ENCODE measurements at regions of chr17 and their contacts with region 1.

Region 1: GRCh38 chr17:81702971-81703746 is at the start of gene MRPL12:
- DNase-seq: peak; percentile 71 to 91
- H3K4me3 ChIP-seq: peak within 1 kb of the TSS; percentile 90
- H3K27ac ChIP-seq: peak within 1 kb of the TSS; percentile 77
- H3K4me1 ChIP-seq: peaks cover 7% of the 10 kb centered on the region
- H3K27me3 ChIP-seq: no peaks in the 10 kb centered on the region
- CTCF ChIP-seq: peak; percentile 50; the same call in 1 of the 2 replicates
- total RNA-seq, gene MRPL12: 98.6 and 142 TPM in 2 replicates

Region 2: GRCh38 chr17:81641825-81642489 is 61.2 kb before region 1 on chr17:
- CTCF ChIA-PET with region 1: no interaction called
- POLR2A ChIA-PET with region 1: no interaction called
- intact Hi-C with region 1: no loop called
- DNase-seq: peak in 1 of 2 experiments; percentile 40
- H3K4me3 ChIP-seq: no peak overlapping the region
- H3K27ac ChIP-seq: no peak overlapping the region
- H3K4me1 ChIP-seq: peaks cover 5% of the 10 kb centered on the region; the same call in 1 of the 2 replicates
- H3K27me3 ChIP-seq: no peaks in the 10 kb centered on the region
- CTCF ChIP-seq: no peak

Region 3: DNA sequence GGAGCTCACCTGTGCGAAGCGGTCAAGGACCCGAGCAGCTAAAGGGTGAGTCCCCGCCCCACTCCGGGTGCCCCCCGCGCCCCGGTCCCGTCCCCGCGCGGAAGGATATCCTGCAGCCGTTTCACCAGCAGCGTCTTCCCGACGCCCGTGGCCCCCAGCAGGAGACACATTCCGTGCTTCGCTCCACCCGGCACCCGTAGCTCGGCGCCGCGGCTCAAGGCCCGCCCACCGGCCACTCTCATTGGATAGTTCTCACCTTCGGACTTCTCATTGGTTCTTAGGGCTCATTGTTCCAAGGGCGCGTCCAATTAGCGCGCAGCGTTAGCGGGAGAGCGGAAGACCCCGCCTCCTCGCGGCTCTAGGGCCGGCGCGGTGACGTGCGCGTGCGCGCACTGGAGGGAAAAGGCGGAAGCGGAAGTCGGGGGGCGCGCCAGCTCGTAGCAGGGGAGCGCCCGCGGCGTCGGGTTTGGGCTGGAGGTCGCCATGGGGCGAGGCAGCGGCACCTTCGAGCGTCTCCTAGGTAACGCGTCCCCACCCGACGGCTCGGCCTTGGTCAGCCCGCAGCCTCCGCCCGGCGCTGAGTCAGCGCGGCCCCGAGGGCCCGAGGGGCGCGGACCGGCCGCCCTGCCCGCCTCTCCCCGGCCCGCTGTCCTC is 19.4 kb before region 1 on chr17 and contains the starts of genes ARL16 and HGS:
- CTCF ChIA-PET with region 1: no interaction called
- POLR2A ChIA-PET with region 1: interaction called, 3 read pairs
- intact Hi-C with region 1: loop called (anchors 1 kb)
- DNase-seq: peak; percentile 90 to 99
- H3K4me3 ChIP-seq: peak within 1 kb of the TSS; percentile 93
- H3K27ac ChIP-seq: peak within 1 kb of the TSS; percentile 78
- H3K4me1 ChIP-seq: peaks cover 5% of the 10 kb centered on the region
- H3K27me3 ChIP-seq: no peaks in the 10 kb centered on the region
- CTCF ChIP-seq: no peak
- total RNA-seq, gene ARL16: 41.7 and 48.3 TPM in 2 replicates
- total RNA-seq, gene HGS: 149 and 166 TPM in 2 replicates

Region 4: DNA sequence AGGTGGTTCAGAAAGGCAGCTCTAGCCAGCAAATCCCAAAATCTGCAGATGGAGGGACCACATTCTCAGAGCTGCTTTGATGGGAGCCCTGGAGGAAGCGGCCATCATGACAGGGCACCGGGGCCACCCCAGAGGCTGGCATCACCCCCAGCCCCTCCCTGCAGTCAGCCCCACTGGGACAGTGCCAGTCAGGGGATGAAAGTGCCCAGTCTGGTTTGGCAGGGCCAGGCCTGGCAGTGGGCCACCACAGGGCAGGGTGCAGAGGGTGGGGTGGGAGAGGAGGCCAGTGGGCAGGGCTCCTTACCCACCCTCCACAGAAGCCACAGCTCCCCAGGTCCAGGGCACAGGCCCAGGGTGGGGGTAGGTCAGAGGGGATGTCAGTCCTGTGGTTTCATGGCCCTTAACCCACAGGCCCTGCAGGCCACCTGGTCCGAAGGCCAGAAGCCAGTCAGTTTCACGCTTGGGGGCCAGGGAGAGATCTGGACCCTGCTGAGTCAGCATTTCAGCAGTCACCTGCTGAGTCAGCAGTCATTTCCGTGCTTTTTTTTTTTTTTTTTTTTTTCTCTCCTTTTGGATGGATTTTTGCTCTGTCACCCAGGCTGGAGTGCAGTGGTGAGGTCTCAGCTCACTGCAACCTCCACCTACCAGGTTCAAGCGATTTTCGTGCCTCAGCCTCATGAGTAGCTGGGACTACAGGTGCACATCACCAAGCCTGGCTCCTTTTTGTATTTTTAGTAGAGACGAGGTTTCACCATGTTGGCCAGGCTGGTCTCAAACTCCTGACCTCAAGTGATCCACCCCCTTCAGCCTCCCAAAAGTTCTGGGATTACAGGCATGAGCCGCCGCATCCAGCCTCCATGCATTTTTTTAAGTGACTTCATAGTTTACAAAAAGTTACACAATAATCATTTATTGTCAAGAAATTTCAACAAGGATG is 19.3 kb after region 1 on chr17:
- CTCF ChIA-PET with region 1: interaction called, 12 read pairs
- POLR2A ChIA-PET with region 1: no interaction called
- intact Hi-C with region 1: no loop called
- DNase-seq: peak; percentile 79 to 99
- H3K4me3 ChIP-seq: no peak overlapping the region
- H3K27ac ChIP-seq: peak overlapping the region; percentile 68
- H3K4me1 ChIP-seq: peaks cover 27% of the 10 kb centered on the region
- H3K27me3 ChIP-seq: no peaks in the 10 kb centered on the region
- CTCF ChIP-seq: no peak

Region 5: DNA sequence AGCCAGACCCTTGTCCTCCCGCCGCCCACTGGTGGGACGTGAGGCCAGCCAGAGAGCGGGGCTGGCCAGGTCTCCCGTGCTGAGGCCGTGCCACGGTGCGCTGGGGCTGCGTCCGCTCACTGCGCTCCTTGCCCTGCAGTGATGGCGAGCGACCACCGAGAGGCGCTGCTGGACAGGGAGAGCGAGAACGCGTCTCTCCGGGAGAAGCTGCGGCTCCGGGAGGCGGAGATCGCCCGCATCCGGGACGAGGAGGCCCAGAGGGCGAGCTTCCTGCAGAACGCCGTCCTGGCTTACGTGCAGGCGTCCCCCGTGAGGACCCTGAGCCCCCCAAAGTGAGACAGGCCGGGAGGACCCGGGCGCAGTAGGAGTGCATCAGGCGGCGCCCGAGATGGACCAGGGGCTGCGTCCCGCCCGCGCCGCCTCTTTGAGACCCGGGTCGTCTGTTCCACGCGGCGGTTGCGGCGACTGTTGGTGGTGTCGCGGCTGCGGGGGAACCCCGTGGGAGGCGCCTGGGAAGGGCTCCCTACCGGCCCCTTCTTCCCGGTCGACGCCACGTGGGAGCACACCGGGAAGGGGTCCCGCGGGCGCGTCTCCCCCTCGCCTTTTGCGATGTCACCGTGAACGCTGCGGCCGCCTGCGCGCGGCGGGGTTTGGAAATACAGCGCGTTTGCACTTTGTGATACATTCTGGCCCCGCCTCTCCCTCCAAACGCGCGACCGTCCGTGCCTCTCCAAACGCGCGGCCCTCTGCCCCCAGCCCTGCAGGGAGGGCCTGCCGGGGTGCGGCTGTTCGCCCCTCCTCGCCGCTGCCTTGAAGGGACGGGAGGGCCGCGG is 327.5 kb after region 1 on chr17:
- CTCF ChIA-PET with region 1: no interaction called
- POLR2A ChIA-PET with region 1: no interaction called
- intact Hi-C with region 1: no loop called
- DNase-seq: peak; percentile 66 to 92
- H3K4me3 ChIP-seq: peak overlapping the region; percentile 65
- H3K27ac ChIP-seq: no peak overlapping the region
- H3K4me1 ChIP-seq: no peaks in the 10 kb centered on the region
- H3K27me3 ChIP-seq: no peaks in the 10 kb centered on the region
- CTCF ChIP-seq: peak; percentile 76

Measured in PC-9 (cell line).